ENCODE measurements at regions of chr1 and their contacts with region 1.

Region 1: GRCh38 chr1:180154325-180155181 is at the start of gene QSOX1:
- DNase-seq: peak; percentile 82
- H3K4me3 ChIP-seq: peak within 1 kb of the TSS; percentile 54 to 90 (median 87)
- H3K27ac ChIP-seq: peak within 1 kb of the TSS; percentile 58
- H3K4me1 ChIP-seq: peaks cover 60% of the 10 kb centered on the region
- H3K27me3 ChIP-seq: no peaks in the 10 kb centered on the region
- CTCF ChIP-seq: no peak
- POLR2A ChIP-seq: peak; percentile 95
- total RNA-seq, gene QSOX1: 256 and 257 TPM in 2 replicates

Region 2: GRCh38 chr1:179954493-179955297 is 199.9 kb before region 1 on chr1 and contains the start of gene CEP350:
- CTCF ChIA-PET with region 1: no interaction called
- POLR2A ChIA-PET with region 1: interaction called, 5 read pairs
- dilution Hi-C with region 1: no loop called
- intact Hi-C with region 1: loop called (anchors 1 kb)
- DNase-seq: peak; percentile 99
- H3K4me3 ChIP-seq: peak within 1 kb of the TSS; percentile 88 to 95 (median 95)
- H3K27ac ChIP-seq: peak within 1 kb of the TSS; percentile 55
- H3K4me1 ChIP-seq: peaks cover 22% of the 10 kb centered on the region
- H3K27me3 ChIP-seq: no peaks in the 10 kb centered on the region
- CTCF ChIP-seq: no peak
- POLR2A ChIP-seq: peak; percentile 87
- total RNA-seq, gene CEP350: 30.1 and 30.3 TPM in 2 replicates

Region 3: DNA sequence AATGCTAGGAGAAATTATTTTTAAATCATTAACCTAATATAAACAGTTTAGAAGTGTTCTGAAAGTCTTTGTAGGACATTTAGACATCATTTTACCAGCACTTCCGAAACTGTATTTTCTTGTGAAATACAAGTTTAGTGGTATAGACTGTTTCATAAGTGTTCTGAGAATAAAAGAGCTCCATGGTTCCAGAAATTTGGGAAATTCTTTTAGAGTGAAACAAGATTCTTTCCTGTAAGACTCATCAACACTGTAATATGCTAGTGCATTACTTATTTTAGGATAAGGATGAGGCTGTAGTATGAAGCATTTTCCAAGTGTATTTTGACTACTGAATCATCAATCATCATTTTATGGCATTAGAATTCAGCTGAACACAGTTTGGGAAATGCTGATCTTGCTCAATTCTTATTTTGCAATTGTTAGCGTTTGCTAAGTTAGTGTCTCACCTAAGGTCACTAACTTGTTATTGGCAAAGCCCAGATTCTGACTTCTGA is 126.6 kb before region 1 on chr1:
- CTCF ChIA-PET with region 1: no interaction called
- POLR2A ChIA-PET with region 1: no interaction called
- dilution Hi-C with region 1: no loop called
- intact Hi-C with region 1: loop called (anchors 5 kb)
- DNase-seq: peak; percentile 26
- H3K4me3 ChIP-seq: no peak overlapping the region
- H3K27ac ChIP-seq: peak overlapping the region; percentile 4
- H3K4me1 ChIP-seq: peaks cover 25% of the 10 kb centered on the region
- H3K27me3 ChIP-seq: no peaks in the 10 kb centered on the region
- CTCF ChIP-seq: no peak
- POLR2A ChIP-seq: no peak

Region 4: DNA sequence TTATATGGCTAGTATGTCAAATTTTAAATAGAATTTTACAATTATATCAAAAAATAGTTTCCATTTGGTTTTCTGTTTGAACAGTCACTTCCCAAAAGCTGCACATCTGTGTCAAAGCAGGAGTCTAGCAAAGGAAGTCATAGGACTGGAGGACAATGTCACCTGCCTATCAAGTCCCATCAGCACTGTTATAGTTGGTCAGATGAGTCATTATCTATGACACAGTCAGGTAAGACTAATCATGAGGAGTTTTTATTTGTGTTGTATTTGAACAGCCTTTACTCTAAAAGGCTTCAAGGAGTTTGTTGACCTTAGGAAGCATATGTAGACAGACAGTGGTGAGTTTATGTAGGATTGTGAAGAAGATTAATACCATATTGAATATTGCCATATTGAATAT is 74.1 kb before region 1 on chr1:
- CTCF ChIA-PET with region 1: no interaction called
- POLR2A ChIA-PET with region 1: no interaction called
- dilution Hi-C with region 1: no loop called
- intact Hi-C with region 1: no loop called
- DNase-seq: no peak
- H3K4me3 ChIP-seq: no peak overlapping the region
- H3K27ac ChIP-seq: no peak overlapping the region
- H3K4me1 ChIP-seq: no peaks in the 10 kb centered on the region
- H3K27me3 ChIP-seq: no peaks in the 10 kb centered on the region
- CTCF ChIP-seq: no peak
- POLR2A ChIP-seq: no peak

Region 5: DNA sequence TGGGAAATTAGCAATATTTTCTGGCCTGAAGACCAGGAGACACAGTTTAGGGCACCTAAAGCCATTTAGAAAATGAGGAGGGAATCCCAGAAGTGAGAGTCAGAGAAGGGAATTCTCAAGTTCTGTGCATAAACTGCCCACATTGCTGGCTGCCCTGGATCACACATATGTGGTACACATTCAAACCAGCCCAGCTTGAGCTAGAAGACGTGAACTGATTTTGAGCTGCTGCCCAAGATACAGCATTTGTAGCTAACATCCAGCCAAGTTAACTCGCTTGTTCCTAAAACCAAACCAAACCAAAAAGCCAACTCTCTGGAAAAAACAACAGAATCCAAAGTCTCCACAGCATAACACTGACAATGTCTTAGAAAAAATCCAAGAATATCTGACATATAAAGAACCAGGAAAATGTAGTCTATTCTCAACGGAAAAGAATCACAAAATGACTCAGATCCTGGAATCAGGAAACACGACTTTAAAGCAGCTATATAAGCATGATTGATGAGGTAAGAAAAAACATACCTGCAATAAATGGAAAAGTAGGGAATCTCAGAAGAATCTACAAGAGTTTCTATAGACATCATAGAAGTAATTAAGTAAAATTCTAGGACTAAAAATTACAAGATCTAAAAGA is 18.1 kb before region 1 on chr1:
- CTCF ChIA-PET with region 1: interaction called, 5 read pairs
- POLR2A ChIA-PET with region 1: interaction called, 6 read pairs
- dilution Hi-C with region 1: no loop called
- intact Hi-C with region 1: loop called (anchors 1 kb)
- DNase-seq: peak; percentile 78
- H3K4me3 ChIP-seq: no peak overlapping the region
- H3K27ac ChIP-seq: peak overlapping the region; percentile 63
- H3K4me1 ChIP-seq: peaks cover 25% of the 10 kb centered on the region
- H3K27me3 ChIP-seq: no peaks in the 10 kb centered on the region
- CTCF ChIP-seq: no peak
- POLR2A ChIP-seq: no peak

Region 6: DNA sequence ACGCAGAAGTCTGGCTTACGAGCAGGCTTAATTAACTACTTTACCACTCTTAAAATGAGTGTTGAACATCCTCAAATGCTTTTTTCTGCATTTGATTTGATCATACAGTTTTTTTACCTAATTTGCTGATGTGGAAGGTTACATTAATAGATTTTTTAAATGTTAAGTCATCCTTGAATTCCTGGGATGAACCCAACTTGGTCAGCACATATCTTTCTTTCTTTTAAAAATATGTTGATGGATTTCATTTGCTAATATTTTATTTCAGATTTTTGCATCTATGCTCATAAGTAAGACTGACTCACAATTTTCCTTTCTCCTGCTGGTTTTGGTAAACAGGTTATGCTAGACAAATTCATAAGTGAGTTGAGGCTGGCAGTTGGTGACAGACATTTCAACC is 158.4 kb after region 1 on chr1:
- CTCF ChIA-PET with region 1: no interaction called
- POLR2A ChIA-PET with region 1: no interaction called
- dilution Hi-C with region 1: no loop called
- intact Hi-C with region 1: no loop called
- DNase-seq: no peak
- H3K4me3 ChIP-seq: no peak overlapping the region
- H3K27ac ChIP-seq: no peak overlapping the region
- H3K4me1 ChIP-seq: no peaks in the 10 kb centered on the region
- H3K27me3 ChIP-seq: no peaks in the 10 kb centered on the region
- CTCF ChIP-seq: no peak
- POLR2A ChIP-seq: no peak

Region 7: GRCh38 chr1:180631766-180632325 is 477.3 kb after region 1 on chr1 and contains the start of gene XPR1:
- CTCF ChIA-PET with region 1: no interaction called
- POLR2A ChIA-PET with region 1: no interaction called
- dilution Hi-C with region 1: no loop called
- intact Hi-C with region 1: loop called (anchors 5 kb)
- DNase-seq: peak; percentile 99
- H3K4me3 ChIP-seq: peak within 1 kb of the TSS; percentile 71 to 90 (median 87)
- H3K27ac ChIP-seq: peak within 1 kb of the TSS; percentile 34
- H3K4me1 ChIP-seq: peaks cover 13% of the 10 kb centered on the region
- H3K27me3 ChIP-seq: peaks cover 3 to 5% of the 10 kb centered on the region in 2 experiments
- CTCF ChIP-seq: peak in 1 of 2 donors; percentile 26
- POLR2A ChIP-seq: peak; percentile 52
- total RNA-seq, gene XPR1: 26.7 and 29.3 TPM in 2 replicates